ENCODE measurements at regions of chr7 and their contacts with region 1.

Region 1: DNA sequence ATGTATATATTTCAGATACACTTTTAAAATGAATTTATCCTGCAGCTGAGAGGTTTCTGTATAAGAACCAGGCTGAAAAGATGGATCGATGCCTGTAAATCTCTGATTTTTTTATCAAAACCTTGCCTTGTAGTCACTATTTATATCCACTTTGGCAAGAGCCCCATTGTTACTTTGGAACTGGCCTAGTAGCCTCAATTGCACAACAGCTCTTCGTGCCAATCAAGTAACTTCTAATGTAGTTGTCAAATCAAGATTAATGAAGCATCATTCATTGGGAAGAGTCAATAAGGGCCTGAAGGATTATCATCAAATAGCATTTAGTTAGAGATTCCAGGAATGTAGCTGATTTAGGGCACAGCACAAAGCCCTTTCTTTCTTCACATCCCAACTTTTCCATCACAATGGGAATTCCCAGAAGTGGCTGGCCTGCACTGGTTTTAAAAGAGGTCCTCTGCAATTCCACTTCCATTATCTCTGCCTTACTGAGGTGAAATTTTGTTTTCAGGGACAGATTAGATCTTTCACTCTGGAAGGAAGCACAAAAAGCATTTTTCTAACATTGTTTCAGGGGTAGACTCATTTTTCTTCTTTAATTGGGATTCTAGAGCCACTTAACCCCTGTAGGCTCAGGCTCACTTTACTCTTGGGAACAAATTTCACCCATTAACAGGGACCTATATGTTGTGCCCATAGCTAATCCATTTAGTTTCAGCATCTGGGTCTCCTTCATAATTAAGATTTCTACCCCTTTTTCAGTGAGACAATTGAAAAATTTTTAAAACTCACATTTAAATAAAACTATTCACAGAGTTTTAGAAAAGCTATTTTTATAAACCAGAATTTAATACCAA is 97.8 kb downstream of the CALCR start:
- DNase-seq: no peak
- ATAC-seq: no peak
- H3K4me3 ChIP-seq: no peak overlapping the region
- H3K27ac ChIP-seq: no peak overlapping the region
- H3K4me1 ChIP-seq: no peaks in the 10 kb centered on the region
- H3K27me3 ChIP-seq: no peaks in the 10 kb centered on the region
- CTCF ChIP-seq: no peak
- POLR2A ChIP-seq: no peak

Region 2: DNA sequence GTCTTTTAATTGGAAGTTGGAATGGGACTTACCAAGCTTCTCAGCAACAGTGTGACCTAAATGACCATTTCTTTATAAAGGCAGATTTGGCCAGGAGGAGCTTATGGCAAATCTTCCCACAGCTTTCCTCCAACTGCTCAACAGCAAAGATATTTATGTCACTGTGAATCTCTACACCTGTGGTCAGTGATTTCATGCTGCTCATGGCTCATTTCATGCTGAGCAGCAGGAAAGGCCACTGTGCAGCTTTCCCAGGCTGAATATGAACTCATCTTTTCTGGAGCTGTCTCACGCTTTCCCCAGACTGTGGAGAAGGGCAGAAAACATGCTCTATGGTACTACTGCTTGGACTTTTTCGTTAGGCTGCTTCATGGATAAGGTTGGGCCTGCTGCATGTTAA is 68.0 kb after region 1 on chr7:
- intact Hi-C with region 1: loop called in 1 of 10 experiments (anchors 10 kb)
- DNase-seq: no peak
- ATAC-seq: no peak
- H3K4me3 ChIP-seq: no peak overlapping the region
- H3K27ac ChIP-seq: no peak overlapping the region
- H3K4me1 ChIP-seq: no peaks in the 10 kb centered on the region
- H3K27me3 ChIP-seq: peaks cover 0 to 4% (median 0%) of the 10 kb centered on the region in 9 donors
- CTCF ChIP-seq: no peak
- POLR2A ChIP-seq: no peak

Measured in heart left ventricle (tissue), 16 donors.